PC-3 (cell line): ENCODE measurements at regions of chr9 and their contacts with region 1.

Region 1: GRCh38 chr9:83538172-83538889 is at the start of gene FRMD3:
- DNase-seq: peak; percentile 78
- ATAC-seq: peak; percentile 92
- H3K4me3 ChIP-seq: peak within 1 kb of the TSS; percentile 82
- H3K27ac ChIP-seq: peak within 1 kb of the TSS; percentile 16; the same call in 1 of the 2 replicates
- H3K4me1 ChIP-seq: peaks cover 3% of the 10 kb centered on the region; the same call in 1 of the 2 replicates
- H3K27me3 ChIP-seq: no peaks in the 10 kb centered on the region
- CTCF ChIP-seq: peak; percentile 71
- total RNA-seq, gene FRMD3: 3.9 and 6.0 TPM in 2 replicates

Region 2: GRCh38 chr9:83432104-83432639 is 106.2 kb before region 1 on chr9:
- CTCF ChIA-PET with region 1: no interaction called
- POLR2A ChIA-PET with region 1: no interaction called
- intact Hi-C with region 1: loop called (anchors 2 kb)
- DNase-seq: peak; percentile 95
- ATAC-seq: peak; percentile 86
- H3K4me3 ChIP-seq: peak overlapping the region; percentile 18; the same call in 1 of the 2 replicates
- H3K27ac ChIP-seq: peak overlapping the region; percentile 87
- H3K4me1 ChIP-seq: peaks cover 38% of the 10 kb centered on the region
- H3K27me3 ChIP-seq: no peaks in the 10 kb centered on the region
- CTCF ChIP-seq: no peak